ENCODE measurements at regions of chr1 and their contacts with region 1.

Region 1: GRCh38 chr1:62407405-62408009 is 29.3 kb upstream of the USP1 start:
- DNase-seq: peak in 1 of 3 donors; percentile 61
- ATAC-seq: peak; percentile 75
- H3K4me3 ChIP-seq: no peak overlapping the region
- H3K4me1 ChIP-seq: peaks cover 3% of the 10 kb centered on the region
- CTCF ChIP-seq: peak; percentile 38

Region 2: GRCh38 chr1:62175568-62176179 is 231.8 kb before region 1 on chr1:
- intact Hi-C with region 1: loop called (anchors 1 to 5 kb)
- DNase-seq: peak in 1 of 3 donors; percentile 76
- ATAC-seq: peak; percentile 77
- H3K4me3 ChIP-seq: no peak overlapping the region
- H3K4me1 ChIP-seq: no peaks in the 10 kb centered on the region
- CTCF ChIP-seq: peak; percentile 37

Region 3: DNA sequence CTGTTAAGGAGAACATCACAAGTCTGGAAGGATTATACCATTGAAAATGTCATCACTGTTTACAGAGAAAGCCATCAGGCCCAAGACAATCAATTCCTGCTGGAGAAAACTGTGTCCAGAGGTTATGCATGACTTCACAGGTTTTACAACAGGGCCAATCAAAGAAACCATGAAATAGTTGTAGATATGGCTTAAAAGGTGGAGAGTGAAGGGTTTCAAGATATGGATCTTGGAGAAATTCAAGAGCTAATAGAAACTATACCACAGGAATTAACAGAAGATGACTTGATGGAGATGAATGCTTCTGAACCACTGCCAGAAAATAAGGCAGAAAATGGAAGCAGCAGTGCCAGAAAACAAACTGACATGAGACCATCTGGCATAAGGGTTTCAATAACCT is 59.6 kb after region 1 on chr1:
- intact Hi-C with region 1: no loop called
- DNase-seq: no peak
- ATAC-seq: peak; percentile 61
- H3K4me3 ChIP-seq: no peak overlapping the region
- H3K4me1 ChIP-seq: peaks cover 8% of the 10 kb centered on the region
- CTCF ChIP-seq: no peak